Breast epithelium (tissue), 4 donors: ENCODE measurements at regions of chr18 and their contacts with region 1.

Region 1: GRCh38 chr18:33264566-33264965 is 176.0 kb downstream of the CCDC178 start:
- DNase-seq: no peak
- H3K4me3 ChIP-seq: no peak overlapping the region
- H3K27ac ChIP-seq: no peak overlapping the region
- H3K4me1 ChIP-seq: no peaks in the 10 kb centered on the region
- H3K27me3 ChIP-seq: no peaks in the 10 kb centered on the region
- CTCF ChIP-seq: no peak
- POLR2A ChIP-seq: no peak

Region 2: DNA sequence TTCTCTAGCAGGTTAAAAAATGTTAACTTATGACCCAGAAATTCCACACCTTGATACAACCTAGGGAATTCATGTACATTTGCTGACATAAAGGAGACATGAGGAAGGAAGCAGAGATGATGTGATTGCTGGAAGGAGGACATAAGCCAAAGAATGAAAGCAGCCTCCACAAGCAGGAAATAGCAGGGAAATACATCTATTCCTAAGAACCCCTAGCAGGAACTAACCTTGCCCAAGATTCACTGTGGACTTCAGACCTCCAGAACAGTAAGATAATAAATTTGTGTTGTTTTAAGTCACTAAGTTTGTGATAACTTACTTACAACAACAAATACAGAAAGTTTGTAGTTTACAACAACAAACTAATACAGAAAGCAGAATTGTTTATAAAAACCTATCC is 1892.6 kb before region 1 on chr18:
- intact Hi-C with region 1: no loop called
- DNase-seq: no peak
- H3K4me3 ChIP-seq: no peak overlapping the region
- H3K27ac ChIP-seq: no peak overlapping the region
- H3K4me1 ChIP-seq: no peaks in the 10 kb centered on the region
- H3K27me3 ChIP-seq: no peaks in the 10 kb centered on the region
- CTCF ChIP-seq: no peak
- POLR2A ChIP-seq: no peak

Region 3: GRCh38 chr18:32998285-32998684 is 266.3 kb before region 1 on chr18:
- intact Hi-C with region 1: no loop called
- DNase-seq: no peak
- H3K4me3 ChIP-seq: no peak overlapping the region
- H3K27ac ChIP-seq: no peak overlapping the region
- H3K4me1 ChIP-seq: no peaks in the 10 kb centered on the region
- H3K27me3 ChIP-seq: no peaks in the 10 kb centered on the region
- CTCF ChIP-seq: no peak
- POLR2A ChIP-seq: no peak

Region 4: GRCh38 chr18:33282709-33283333 is 18.3 kb after region 1 on chr18:
- intact Hi-C with region 1: loop called (anchors 2 kb)
- DNase-seq: no peak
- H3K4me3 ChIP-seq: no peak overlapping the region
- H3K27ac ChIP-seq: no peak overlapping the region
- H3K4me1 ChIP-seq: no peaks in the 10 kb centered on the region
- H3K27me3 ChIP-seq: no peaks in the 10 kb centered on the region
- CTCF ChIP-seq: no peak
- POLR2A ChIP-seq: no peak